Left ventricle myocardium inferior (tissue), 1 donor: ENCODE measurements at regions of chr10 and their contacts with region 1.

Region 1: GRCh38 chr10:79374312-79375191 is 27.3 kb downstream of the PPIF start:
- DNase-seq: peak; percentile 80
- H3K4me3 ChIP-seq: no peak overlapping the region
- H3K27ac ChIP-seq: no peak overlapping the region
- H3K4me1 ChIP-seq: peaks cover 19% of the 10 kb centered on the region
- H3K27me3 ChIP-seq: no peaks in the 10 kb centered on the region
- CTCF ChIP-seq: peak; percentile 98

Region 2: GRCh38 chr10:79468024-79468560 is 93.5 kb after region 1 on chr10:
- intact Hi-C with region 1: loop called (anchors 5 kb)
- DNase-seq: no peak
- H3K4me3 ChIP-seq: peak overlapping the region; percentile 9
- H3K27ac ChIP-seq: peak overlapping the region; percentile 74
- H3K4me1 ChIP-seq: peaks cover 45% of the 10 kb centered on the region
- H3K27me3 ChIP-seq: no peaks in the 10 kb centered on the region
- CTCF ChIP-seq: no peak

Region 3: GRCh38 chr10:79487296-79488194 is 113.0 kb after region 1 on chr10:
- intact Hi-C with region 1: loop called (anchors 5 kb)
- DNase-seq: peak; percentile 43
- H3K4me3 ChIP-seq: no peak overlapping the region
- H3K27ac ChIP-seq: peak overlapping the region; percentile 73
- H3K4me1 ChIP-seq: peaks cover 49% of the 10 kb centered on the region
- H3K27me3 ChIP-seq: no peaks in the 10 kb centered on the region
- CTCF ChIP-seq: peak; percentile 81

Region 4: GRCh38 chr10:80168679-80169380 is 794.3 kb after region 1 on chr10:
- intact Hi-C with region 1: no loop called
- DNase-seq: no peak
- H3K4me3 ChIP-seq: no peak overlapping the region
- H3K27ac ChIP-seq: peak overlapping the region; percentile 85
- H3K4me1 ChIP-seq: peaks cover 100% of the 10 kb centered on the region
- H3K27me3 ChIP-seq: no peaks in the 10 kb centered on the region
- CTCF ChIP-seq: peak; percentile 34